Caco-2 (cell line): ENCODE measurements at regions of chr22 and their contacts with region 1.

Region 1: GRCh38 chr22:38628444-38628843 is 27.7 kb downstream of the FAM227A start:
- DNase-seq: no peak
- H3K4me3 ChIP-seq: no peak overlapping the region
- H3K4me3 Mint-ChIP-seq: no peak overlapping the region
- H3K27ac Mint-ChIP-seq: no peak overlapping the region
- H3K4me1 ChIP-seq: peaks cover 5% of the 10 kb centered on the region; the same call in 1 of the 2 replicates
- H3K4me1 Mint-ChIP-seq: peaks cover 20% of the 10 kb centered on the region
- H3K27me3 ChIP-seq: no peaks in the 10 kb centered on the region
- H3K27me3 Mint-ChIP-seq: no peaks in the 10 kb centered on the region
- CTCF ChIP-seq: no peak

Region 2: DNA sequence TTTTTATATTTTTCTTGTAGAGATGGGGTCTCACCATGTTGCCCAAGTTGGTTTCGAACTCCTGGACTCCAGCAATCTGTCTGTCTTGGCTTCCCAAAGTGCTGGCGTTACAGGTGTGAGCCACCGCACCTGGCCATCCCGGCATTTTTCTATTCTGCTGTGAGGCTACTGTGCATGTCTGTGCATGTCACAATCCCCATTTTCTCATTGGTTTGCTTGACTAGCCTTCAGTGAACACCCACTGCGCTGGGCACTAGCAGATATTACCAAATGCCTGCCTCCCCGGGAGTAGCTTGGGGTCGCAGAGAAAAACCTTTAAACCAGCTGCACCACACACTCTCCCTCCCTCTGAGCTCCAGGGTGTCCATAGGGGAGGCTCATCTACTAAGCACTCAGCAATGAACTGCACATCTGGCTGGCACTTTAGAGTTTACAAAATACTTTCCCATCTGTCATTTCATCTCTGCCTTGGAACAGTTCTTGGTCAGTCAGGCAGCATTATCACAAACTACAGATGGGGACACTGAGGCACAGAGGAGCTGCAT is 316.1 kb before region 1 on chr22:
- CTCF ChIA-PET with region 1: no interaction called
- POLR2A ChIA-PET with region 1: interaction called, 10 read pairs
- intact Hi-C with region 1: no loop called
- DNase-seq: no peak
- H3K4me3 ChIP-seq: no peak overlapping the region
- H3K4me3 Mint-ChIP-seq: no peak overlapping the region
- H3K27ac Mint-ChIP-seq: no peak overlapping the region
- H3K4me1 ChIP-seq: 0 out of 2 replicates have a peak, but pooled peaks cover 6% of the 10 kb centered on the region
- H3K4me1 Mint-ChIP-seq: no peaks in the 10 kb centered on the region
- H3K27me3 ChIP-seq: no peaks in the 10 kb centered on the region
- H3K27me3 Mint-ChIP-seq: no peaks in the 10 kb centered on the region
- CTCF ChIP-seq: no peak

Region 3: GRCh38 chr22:38403812-38404211 is 224.6 kb before region 1 on chr22:
- CTCF ChIA-PET with region 1: no interaction called
- POLR2A ChIA-PET with region 1: no interaction called
- intact Hi-C with region 1: no loop called
- DNase-seq: no peak
- H3K4me3 ChIP-seq: no peak overlapping the region
- H3K4me3 Mint-ChIP-seq: no peak overlapping the region
- H3K27ac Mint-ChIP-seq: no peak overlapping the region
- H3K4me1 ChIP-seq: no peaks in the 10 kb centered on the region
- H3K4me1 Mint-ChIP-seq: peaks cover 8% of the 10 kb centered on the region
- H3K27me3 ChIP-seq: no peaks in the 10 kb centered on the region
- H3K27me3 Mint-ChIP-seq: no peaks in the 10 kb centered on the region
- CTCF ChIP-seq: no peak

Region 4: GRCh38 chr22:38554281-38554680 is 74.2 kb before region 1 on chr22:
- CTCF ChIA-PET with region 1: no interaction called
- POLR2A ChIA-PET with region 1: no interaction called
- intact Hi-C with region 1: no loop called
- DNase-seq: no peak
- H3K4me3 ChIP-seq: no peak overlapping the region
- H3K4me3 Mint-ChIP-seq: no peak overlapping the region
- H3K27ac Mint-ChIP-seq: no peak overlapping the region
- H3K4me1 ChIP-seq: no peaks in the 10 kb centered on the region
- H3K4me1 Mint-ChIP-seq: peaks cover under 1% of the 10 kb centered on the region
- H3K27me3 ChIP-seq: no peaks in the 10 kb centered on the region
- H3K27me3 Mint-ChIP-seq: no peaks in the 10 kb centered on the region
- CTCF ChIP-seq: no peak

Region 5: GRCh38 chr22:38601221-38601764 is 27.2 kb before region 1 on chr22:
- CTCF ChIA-PET with region 1: no interaction called
- POLR2A ChIA-PET with region 1: no interaction called
- intact Hi-C with region 1: no loop called
- DNase-seq: no peak
- H3K4me3 ChIP-seq: no peak overlapping the region
- H3K4me3 Mint-ChIP-seq: no peak overlapping the region
- H3K27ac Mint-ChIP-seq: no peak overlapping the region
- H3K4me1 ChIP-seq: no peaks in the 10 kb centered on the region
- H3K4me1 Mint-ChIP-seq: no peaks in the 10 kb centered on the region
- H3K27me3 ChIP-seq: no peaks in the 10 kb centered on the region
- H3K27me3 Mint-ChIP-seq: no peaks in the 10 kb centered on the region
- CTCF ChIP-seq: no peak